ENCODE measurements at regions of chr10 and their contacts with region 1.

Region 1: DNA sequence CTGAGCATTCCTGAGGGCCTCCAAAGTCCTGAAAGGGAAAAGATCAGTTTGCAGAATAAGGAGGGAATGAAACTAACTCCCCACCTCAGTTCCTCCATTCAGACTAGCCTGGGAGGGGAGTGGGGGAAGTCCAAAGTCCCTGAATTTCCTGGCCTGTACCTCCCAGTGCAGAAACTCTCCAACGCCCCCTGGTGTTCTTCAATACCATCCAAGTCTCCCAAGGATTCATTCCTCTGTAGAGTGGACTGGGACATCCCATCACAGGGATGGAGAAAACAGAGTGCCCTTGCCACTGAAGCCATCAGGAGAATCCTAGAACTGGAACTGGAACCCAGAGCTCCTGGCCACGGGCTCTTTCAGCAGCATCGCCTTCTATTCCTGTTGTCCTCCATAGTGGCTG is 1.6 kb upstream of the COL13A1 start:
- DNase-seq: no peak
- H3K4me3 Mint-ChIP-seq: no peak overlapping the region
- H3K27ac Mint-ChIP-seq: no peak overlapping the region
- H3K4me1 Mint-ChIP-seq: no peaks in the 10 kb centered on the region
- H3K27me3 Mint-ChIP-seq: peaks cover 54% of the 10 kb centered on the region

Region 2: GRCh38 chr10:69573056-69573806 is 226.9 kb before region 1 on chr10 and contains the start of gene NEUROG3:
- intact Hi-C with region 1: no loop called
- DNase-seq: no peak
- H3K4me3 Mint-ChIP-seq: peak within 1 kb of the TSS; percentile 33
- H3K27ac Mint-ChIP-seq: no peak within 1 kb of the TSS
- H3K4me1 Mint-ChIP-seq: peaks cover 13% of the 10 kb centered on the region
- H3K27me3 Mint-ChIP-seq: peaks cover 88% of the 10 kb centered on the region
- total RNA-seq, gene NEUROG3: not detected in 2 replicates

Region 3: DNA sequence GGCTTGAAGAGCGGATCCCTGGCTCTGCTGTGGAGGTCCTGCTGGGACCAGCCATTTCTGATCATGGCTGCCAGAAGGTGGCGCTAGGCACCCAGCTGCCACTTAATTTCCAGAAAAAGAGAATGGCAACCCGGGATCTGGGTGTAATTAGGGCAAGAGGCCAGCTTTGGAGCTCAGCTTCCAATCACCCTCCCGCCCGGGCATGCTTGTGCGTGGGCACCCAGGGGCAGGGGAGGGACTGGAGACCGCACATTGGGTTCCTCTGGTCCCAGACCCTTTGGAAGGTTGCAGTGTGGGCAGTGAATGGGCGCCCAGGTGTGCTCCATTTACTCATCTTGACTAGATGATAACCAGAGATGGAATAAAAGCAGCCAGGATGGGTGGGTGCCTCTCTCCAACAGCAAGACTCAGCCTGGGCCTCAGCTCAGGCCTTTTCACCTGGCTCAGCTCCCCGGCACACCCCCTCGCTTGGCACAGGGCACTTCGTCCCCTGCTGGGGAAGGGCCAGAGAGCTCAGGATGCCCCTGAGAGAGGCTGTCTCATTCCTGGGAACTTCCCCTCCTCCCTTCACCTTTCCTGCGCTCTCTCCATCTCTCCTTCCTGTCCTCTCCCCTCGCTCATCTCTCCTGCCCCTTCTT is 155.3 kb before region 1 on chr10:
- intact Hi-C with region 1: loop called (anchors 2 kb)
- DNase-seq: no peak
- H3K4me3 Mint-ChIP-seq: no peak overlapping the region
- H3K27ac Mint-ChIP-seq: no peak overlapping the region
- H3K4me1 Mint-ChIP-seq: no peaks in the 10 kb centered on the region
- H3K27me3 Mint-ChIP-seq: peaks cover 4% of the 10 kb centered on the region

Region 4: DNA sequence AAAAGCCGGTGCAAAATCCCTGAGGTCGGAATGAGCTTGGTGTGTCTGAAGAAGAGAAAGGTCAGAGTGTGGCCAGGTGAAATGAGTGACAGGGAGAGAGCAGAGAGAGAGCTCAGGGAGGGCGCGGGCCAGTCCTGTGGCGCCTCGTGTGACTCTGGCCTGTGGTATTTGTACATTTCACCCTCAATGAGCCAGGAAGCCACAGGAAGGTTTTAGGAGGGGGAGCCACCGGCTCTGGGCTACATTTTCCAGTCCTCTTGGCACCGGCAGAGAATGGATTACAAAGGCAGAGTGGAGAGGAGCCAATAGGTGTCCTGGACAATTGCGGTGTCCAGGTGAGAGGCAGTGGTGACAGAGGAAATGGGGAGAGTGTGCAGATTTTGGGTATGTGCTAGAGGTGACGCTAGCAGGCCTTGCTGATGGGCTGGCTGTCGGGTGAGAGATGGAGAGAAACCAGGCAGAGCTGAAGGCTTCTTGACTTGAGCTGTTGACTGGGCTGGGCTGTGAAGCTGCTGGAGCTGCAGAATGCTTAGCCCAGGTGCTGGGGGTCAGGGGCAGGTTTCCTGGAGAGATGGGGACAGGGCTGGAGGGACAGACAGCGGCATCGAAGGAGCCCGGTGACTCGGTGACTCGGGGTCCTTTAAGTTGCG is 39.7 kb after region 1 on chr10:
- intact Hi-C with region 1: no loop called
- DNase-seq: no peak
- H3K4me3 Mint-ChIP-seq: no peak overlapping the region
- H3K27ac Mint-ChIP-seq: no peak overlapping the region
- H3K4me1 Mint-ChIP-seq: no peaks in the 10 kb centered on the region
- H3K27me3 Mint-ChIP-seq: peaks cover 19% of the 10 kb centered on the region